Esophagus squamous epithelium (tissue), 5 donors: ENCODE measurements at regions of chr15 and their contacts with region 1.

Region 1: DNA sequence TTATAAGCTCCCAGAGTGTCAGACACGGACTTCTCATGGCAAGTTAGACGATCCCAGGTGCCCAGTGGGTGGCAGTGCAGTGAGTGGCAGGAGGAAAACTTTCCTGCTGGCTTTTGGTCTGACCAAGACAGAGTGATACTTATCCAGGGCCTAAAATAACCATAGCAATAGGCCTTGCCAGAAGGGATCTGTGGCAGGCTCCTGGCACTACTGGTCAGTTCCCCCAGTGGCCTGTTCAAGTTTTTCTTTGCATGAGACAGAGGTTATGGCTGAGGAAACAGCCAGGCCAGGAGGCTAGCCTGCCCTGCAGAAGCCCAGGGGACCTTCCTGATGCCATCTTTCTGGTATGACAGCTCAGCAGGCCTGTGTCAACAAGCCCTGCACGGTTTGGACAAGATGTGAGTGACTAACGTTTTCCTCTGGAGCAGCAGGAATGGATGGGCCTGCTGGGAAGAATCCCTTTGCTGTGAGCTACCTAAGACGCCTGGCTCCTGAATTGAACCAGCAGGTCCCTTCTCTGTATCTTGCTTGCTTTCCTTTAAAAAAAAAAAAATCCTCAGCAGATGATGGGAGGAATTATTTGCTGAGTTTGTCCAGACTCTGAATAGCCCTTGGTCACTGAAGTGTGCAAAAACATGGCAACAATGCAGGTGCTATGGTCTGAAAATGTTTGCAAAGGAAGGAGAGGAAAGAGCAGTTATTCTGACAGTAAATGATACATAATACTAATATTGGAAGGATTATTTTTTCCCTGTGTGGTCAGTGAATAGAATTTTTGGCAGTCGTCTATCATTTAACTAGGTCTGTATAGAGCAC is 18.0 kb downstream of the SCG5 start:
- DNase-seq: no peak
- H3K4me3 ChIP-seq: no peak overlapping the region
- H3K27ac ChIP-seq: peak overlapping the region in 3 of 4 donors; percentile 11 to 49 (median 34)
- H3K4me1 ChIP-seq: peaks cover 4 to 40% (median 11%) of the 10 kb centered on the region in 3 donors
- H3K27me3 ChIP-seq: no peaks in the 10 kb centered on the region
- CTCF ChIP-seq: no peak
- POLR2A ChIP-seq: no peak

Region 2: GRCh38 chr15:32763295-32763694 is 103.7 kb after region 1 on chr15:
- intact Hi-C with region 1: no loop called
- DNase-seq: no peak
- H3K4me3 ChIP-seq: no peak overlapping the region
- H3K27ac ChIP-seq: no peak overlapping the region
- H3K4me1 ChIP-seq: no peaks in the 10 kb centered on the region
- H3K27me3 ChIP-seq: peaks cover 0 to 4% (median 0%) of the 10 kb centered on the region in 4 donors
- CTCF ChIP-seq: no peak
- POLR2A ChIP-seq: no peak

Region 3: GRCh38 chr15:32994810-32995424 is 335.4 kb after region 1 on chr15:
- intact Hi-C with region 1: loop called (anchors 5 kb)
- DNase-seq: no peak
- H3K4me3 ChIP-seq: no peak overlapping the region
- H3K27ac ChIP-seq: no peak overlapping the region
- H3K4me1 ChIP-seq: no peaks in the 10 kb centered on the region
- H3K27me3 ChIP-seq: no peaks in the 10 kb centered on the region
- CTCF ChIP-seq: peak in 5 of 6 experiments; percentile 18 to 69 (median 55)
- POLR2A ChIP-seq: no peak